Ovary (tissue), 10 donors: ENCODE measurements at regions of chr10 and their contacts with region 1.

Region 1: GRCh38 chr10:104209575-104210198 is 22.5 kb downstream of the CFAP43 start:
- DNase-seq: peak in 3 of 5 donors; percentile 25 to 50 (median 33)
- H3K4me3 ChIP-seq: no peak overlapping the region
- H3K27ac ChIP-seq: no peak overlapping the region
- H3K4me1 ChIP-seq: no peaks in the 10 kb centered on the region
- H3K27me3 ChIP-seq: no peaks in the 10 kb centered on the region
- CTCF ChIP-seq: peak in 1 of 3 donors; percentile 40
- EP300 ChIP-seq: no peak
- POLR2A ChIP-seq: no peak

Region 2: DNA sequence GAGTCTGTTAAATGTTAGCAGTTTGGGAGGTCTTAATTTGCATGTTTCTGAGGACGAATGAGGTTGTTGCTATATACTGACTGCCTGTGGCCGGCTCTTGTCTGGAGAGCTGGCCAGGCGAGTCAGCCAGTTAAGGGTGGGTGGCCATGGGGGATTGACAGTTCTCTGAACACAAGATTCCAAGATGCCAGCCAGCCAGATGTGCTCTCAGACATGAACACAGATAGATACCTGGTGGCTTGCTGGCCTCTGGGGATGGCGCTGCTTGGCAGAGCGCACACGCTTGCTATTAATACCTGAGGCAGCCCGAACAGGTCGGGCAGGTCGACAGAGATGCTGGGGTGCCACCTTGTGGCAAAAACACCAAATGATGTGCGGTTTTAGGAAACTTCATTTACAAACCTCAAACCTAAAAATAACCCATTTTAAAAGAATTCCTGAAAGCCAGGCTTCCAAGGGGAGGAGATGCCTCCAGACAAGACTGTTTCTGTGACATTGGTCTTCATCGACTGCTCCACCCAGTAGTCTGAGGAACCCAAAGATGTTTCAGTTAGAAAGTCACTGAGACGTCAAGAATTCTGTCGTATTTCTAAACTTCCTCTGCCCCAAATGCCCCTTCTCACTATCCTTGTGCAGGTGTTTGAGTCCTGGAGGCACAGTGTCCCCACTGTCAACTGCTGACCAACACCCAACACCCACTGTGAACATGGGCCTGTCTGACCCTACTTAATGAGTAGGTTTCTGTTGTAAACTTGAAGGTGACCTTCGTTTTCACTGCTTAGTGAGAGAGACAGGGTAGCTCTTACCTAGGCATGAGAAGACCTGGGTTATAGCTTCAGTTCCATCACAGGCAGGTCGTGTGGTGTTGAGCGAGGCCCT is 1140.0 kb before region 1 on chr10:
- intact Hi-C with region 1: no loop called
- DNase-seq: peak; percentile 54 to 75 (median 73)
- H3K4me3 ChIP-seq: no peak overlapping the region
- H3K27ac ChIP-seq: no peak overlapping the region
- H3K4me1 ChIP-seq: no peaks in the 10 kb centered on the region
- H3K27me3 ChIP-seq: no peaks in the 10 kb centered on the region
- CTCF ChIP-seq: peak; percentile 70 to 74 (median 73)
- EP300 ChIP-seq: no peak
- POLR2A ChIP-seq: no peak

Region 3: DNA sequence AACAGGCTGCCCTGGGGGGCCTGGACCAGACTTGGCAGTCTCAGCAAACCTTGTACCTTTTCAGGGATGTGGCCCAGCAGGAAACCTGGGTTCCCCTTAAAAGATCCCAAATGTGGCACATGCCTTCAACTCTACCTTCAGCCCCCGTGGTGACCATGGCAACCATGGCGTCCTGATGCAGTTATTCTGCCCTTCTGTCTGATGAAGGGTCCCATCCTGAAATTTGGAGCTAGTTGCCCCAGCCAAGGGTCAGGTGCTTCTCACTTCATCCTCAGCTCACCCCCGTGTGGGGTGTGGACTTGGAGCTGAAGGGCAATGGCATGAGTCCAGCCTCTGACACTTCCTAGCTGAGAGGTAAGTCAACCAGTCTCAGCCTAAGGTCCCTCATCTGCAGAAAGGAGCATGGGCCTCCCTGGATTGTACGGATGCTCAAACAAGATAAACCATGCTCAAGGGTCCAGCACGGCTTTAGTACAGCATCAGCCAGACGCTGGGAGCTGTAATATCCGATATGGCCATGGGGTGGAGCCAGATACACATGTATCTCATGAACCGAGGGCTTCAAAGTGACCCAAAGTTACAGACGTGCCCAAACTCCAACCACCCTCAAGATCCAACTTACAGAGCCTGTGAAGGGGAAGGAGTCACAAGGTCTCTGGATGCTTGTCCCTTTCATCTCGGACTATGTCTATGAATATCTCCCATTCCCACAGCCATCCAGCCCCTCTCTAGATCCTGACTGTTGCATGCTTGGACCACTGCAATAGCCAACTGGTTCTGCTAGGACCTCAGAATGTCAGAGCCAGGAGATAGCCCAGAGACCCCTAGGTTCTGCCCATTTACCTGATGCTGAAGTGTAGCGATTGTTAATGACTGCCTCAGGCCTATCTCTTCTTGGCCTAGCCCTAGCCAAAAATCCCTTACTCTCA is 496.9 kb before region 1 on chr10:
- intact Hi-C with region 1: loop called in 1 of 4 experiments (anchors 10 kb)
- DNase-seq: peak; percentile 74 to 91 (median 87)
- H3K4me3 ChIP-seq: no peak overlapping the region
- H3K27ac ChIP-seq: no peak overlapping the region
- H3K4me1 ChIP-seq: peaks cover 1% of the 10 kb centered on the region
- H3K27me3 ChIP-seq: no peaks in the 10 kb centered on the region
- CTCF ChIP-seq: peak; percentile 66 to 97 (median 95)
- EP300 ChIP-seq: no peak
- POLR2A ChIP-seq: no peak

Region 4: GRCh38 chr10:103870516-103870915 is 339.2 kb before region 1 on chr10:
- intact Hi-C with region 1: loop called in 1 of 4 experiments (anchors 10 kb)
- DNase-seq: no peak
- H3K4me3 ChIP-seq: no peak overlapping the region
- H3K27ac ChIP-seq: no peak overlapping the region
- H3K4me1 ChIP-seq: no peaks in the 10 kb centered on the region
- H3K27me3 ChIP-seq: no peaks in the 10 kb centered on the region
- CTCF ChIP-seq: no peak
- EP300 ChIP-seq: no peak
- POLR2A ChIP-seq: no peak

Region 5: GRCh38 chr10:103888113-103888841 is 321.4 kb before region 1 on chr10:
- intact Hi-C with region 1: loop called in 2 of 4 experiments (anchors 2 to 10 kb)
- DNase-seq: peak; percentile 61 to 78 (median 75)
- H3K4me3 ChIP-seq: no peak overlapping the region
- H3K27ac ChIP-seq: peak overlapping the region in 1 of 2 donors; percentile 62
- H3K4me1 ChIP-seq: no peaks in the 10 kb centered on the region
- H3K27me3 ChIP-seq: no peaks in the 10 kb centered on the region
- CTCF ChIP-seq: peak; percentile 26 to 91 (median 91)
- EP300 ChIP-seq: no peak
- POLR2A ChIP-seq: no peak

Region 6: DNA sequence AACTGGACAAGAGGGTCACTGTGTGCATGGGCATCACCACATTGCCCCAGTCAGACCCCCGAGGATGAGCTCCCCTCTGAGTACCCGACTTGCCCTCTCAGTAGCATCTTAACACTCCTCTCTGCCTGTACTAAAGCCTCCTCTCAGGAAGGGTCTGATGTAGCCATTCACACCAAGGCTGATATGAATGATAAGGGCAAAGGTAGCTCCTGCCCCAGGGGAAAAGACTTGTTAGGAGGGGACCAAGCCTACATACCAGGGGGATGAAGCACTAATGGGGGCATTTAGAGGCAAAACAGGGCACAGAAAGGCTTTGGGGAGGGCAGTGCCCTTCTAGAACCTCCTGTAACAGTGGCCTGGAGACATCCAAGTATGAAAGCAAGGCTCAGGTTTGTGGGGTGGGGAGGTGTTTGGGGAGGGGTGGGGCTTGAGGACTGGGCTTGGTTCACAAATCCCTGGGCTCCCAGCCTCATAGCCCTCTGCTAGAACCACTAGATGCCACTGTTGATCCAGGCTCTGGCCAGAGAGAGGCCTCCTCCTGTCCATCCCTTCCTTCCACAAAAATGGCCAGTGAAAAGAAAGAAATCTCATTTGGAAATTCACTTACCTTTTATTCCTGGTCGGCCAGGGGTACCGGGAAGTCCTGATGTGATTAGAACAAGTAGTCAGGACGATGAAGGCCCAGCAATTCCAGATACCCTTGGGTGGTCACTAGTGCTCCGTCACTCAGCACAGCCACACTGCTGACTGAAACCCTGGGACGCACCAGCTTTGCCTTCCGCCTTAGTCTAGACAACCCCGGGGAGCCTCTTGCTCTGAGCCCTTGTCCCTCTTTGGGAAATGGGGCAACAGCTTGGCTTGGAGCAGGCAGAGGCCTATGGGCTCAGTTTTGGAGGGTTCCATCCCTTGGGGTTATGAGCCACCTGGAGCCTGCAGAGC is 164.3 kb before region 1 on chr10:
- intact Hi-C with region 1: loop called in 2 of 4 experiments (anchors 5 kb)
- DNase-seq: peak in 3 of 5 donors; percentile 33 to 39 (median 38)
- H3K4me3 ChIP-seq: no peak overlapping the region
- H3K27ac ChIP-seq: no peak overlapping the region
- H3K4me1 ChIP-seq: no peaks in the 10 kb centered on the region
- H3K27me3 ChIP-seq: no peaks in the 10 kb centered on the region
- CTCF ChIP-seq: peak in 1 of 3 donors; percentile 23
- EP300 ChIP-seq: no peak
- POLR2A ChIP-seq: no peak